ENCODE measurements at regions of chr6 and their contacts with region 1.

Region 1: GRCh38 chr6:46848684-46849360 is 55.6 kb downstream of the MEP1A start:
- DNase-seq: peak; percentile 50 to 59
- ATAC-seq: peak; percentile 64 to 85
- H3K4me3 ChIP-seq: peak overlapping the region in 1 of 4 donors; percentile 14
- H3K27ac ChIP-seq: no peak overlapping the region
- H3K4me1 ChIP-seq: peaks cover 3 to 20% of the 10 kb centered on the region in 2 donors
- H3K27me3 ChIP-seq: no peaks in the 10 kb centered on the region
- CTCF ChIP-seq: peak; percentile 86 to 96 (median 88)
- POLR2A ChIP-seq: no peak

Region 2: GRCh38 chr6:46903175-46903574 is 54.4 kb after region 1 on chr6:
- in situ Hi-C with region 1: no loop called
- intact Hi-C with region 1: no loop called
- DNase-seq: no peak
- ATAC-seq: peak in 1 of 2 donors; percentile 38
- H3K4me3 ChIP-seq: peak overlapping the region in 1 of 4 donors; percentile 7
- H3K27ac ChIP-seq: peak overlapping the region; percentile 29 to 61 (median 53)
- H3K4me1 ChIP-seq: peaks cover 0 to 18% of the 10 kb centered on the region in 2 donors
- H3K27me3 ChIP-seq: no peaks in the 10 kb centered on the region
- CTCF ChIP-seq: no peak
- POLR2A ChIP-seq: no peak

Region 3: DNA sequence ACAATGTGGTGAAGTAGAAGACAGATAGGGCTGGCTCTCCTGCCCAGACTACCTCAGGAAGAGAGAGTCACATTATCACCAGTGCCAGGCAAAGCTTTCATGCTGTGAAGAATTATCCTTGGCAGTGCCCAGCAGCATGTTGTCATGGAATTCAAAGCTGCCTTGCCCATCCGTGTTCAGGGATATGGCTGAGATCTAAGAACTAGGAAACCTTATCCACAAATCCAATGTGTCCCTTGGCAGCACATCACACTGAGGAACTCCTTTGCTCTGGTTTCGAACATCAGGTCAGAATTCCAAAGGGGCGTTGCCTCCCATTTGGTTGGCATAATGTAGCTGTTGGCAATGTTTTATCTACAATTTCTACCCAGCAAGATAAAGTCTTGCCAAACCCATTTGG is 140.6 kb after region 1 on chr6:
- in situ Hi-C with region 1: loop called in 1 of 4 experiments (anchors 5 kb)
- intact Hi-C with region 1: loop called (anchors 1 kb)
- DNase-seq: peak in 1 of 2 donors; percentile 17
- ATAC-seq: peak; percentile 46 to 49
- H3K4me3 ChIP-seq: no peak overlapping the region
- H3K27ac ChIP-seq: peak overlapping the region in 3 of 4 donors; percentile 45 to 52 (median 50)
- H3K4me1 ChIP-seq: peaks cover 4 to 15% of the 10 kb centered on the region in 2 donors
- H3K27me3 ChIP-seq: no peaks in the 10 kb centered on the region
- CTCF ChIP-seq: no peak
- POLR2A ChIP-seq: no peak

Region 4: DNA sequence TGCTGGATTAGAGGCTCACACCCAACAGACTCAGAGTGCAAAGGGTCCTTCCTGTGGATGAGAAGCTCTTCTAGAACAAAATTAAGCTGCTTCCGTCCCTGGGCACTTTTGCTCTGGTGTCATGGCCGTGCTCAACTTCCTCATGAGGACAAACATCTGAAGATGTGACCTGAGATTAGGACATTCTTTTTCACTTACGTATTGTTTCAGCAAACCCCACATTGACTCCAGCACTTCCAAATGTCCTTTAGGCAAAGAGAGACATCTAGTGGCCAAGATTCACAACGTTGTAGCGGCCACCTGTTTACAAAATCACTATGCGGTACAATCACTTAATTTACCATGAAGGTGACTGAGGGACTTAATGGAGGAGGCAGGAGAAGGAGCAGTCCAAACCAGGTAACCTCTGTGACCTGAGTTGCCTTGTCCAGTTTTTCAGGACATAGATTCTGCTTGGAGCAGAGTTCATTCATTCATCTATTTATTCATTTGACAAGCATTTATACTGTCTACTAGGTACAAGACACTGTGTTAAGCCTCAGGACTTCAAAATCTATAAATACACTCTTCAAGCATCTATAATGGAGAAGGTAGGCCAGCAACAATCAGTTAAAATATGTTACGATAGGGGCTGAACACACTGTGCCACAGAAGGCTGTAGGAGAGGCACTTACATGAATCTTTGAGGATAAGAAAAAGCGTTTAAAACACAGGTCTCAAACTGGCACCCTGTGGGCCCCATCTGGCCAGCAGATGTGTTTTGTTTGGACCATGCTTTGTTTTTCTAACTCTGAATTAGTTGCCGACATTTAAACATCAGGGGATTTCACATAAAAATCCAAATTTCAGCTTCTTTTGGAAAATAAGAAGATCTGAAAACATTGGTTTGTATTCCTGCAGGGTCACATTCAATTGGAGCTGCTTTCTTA is 198.9 kb after region 1 on chr6:
- in situ Hi-C with region 1: loop called (anchors 10 kb)
- intact Hi-C with region 1: loop called (anchors 1 kb)
- DNase-seq: peak; percentile 5 to 18
- ATAC-seq: peak; percentile 93 to 96
- H3K4me3 ChIP-seq: no peak overlapping the region
- H3K27ac ChIP-seq: peak overlapping the region in 1 of 4 donors; percentile 43
- H3K4me1 ChIP-seq: no peaks in the 10 kb centered on the region
- H3K27me3 ChIP-seq: no peaks in the 10 kb centered on the region
- CTCF ChIP-seq: peak; percentile 56 to 77 (median 63)
- POLR2A ChIP-seq: no peak

Region 5: DNA sequence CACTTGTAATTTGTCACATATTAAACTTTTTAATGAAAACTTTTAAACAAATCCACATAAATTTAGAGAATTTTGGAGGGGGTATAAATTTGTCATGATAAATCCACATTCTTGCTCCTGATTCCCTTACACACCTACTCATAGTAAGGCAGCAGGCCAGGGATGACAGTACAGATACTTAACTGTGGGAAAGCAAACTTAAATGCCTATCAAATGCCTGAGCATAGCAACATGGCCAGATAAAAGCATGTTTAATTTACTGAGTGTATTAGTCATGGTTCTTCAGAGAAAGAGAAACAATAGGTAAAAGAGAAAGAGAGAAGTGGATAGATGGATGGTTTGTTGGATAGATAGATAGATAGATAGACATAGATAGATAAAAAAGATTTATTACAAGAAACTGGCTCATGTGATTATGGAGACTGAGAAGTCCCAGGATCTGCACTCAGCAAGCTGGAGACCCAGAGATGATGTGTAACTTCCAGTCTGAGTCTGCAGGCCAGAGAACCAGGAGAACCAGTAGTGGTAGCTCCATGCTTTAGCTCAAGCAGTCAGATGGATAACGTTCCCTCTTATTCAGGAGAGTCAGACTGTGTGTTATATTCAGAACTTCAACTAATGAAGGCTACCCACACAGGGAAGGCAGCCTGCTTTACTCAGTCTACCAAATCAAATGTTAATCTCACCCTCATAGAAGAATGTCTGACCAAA is 209.2 kb after region 1 on chr6:
- in situ Hi-C with region 1: loop called in 1 of 4 experiments (anchors 10 kb)
- intact Hi-C with region 1: no loop called
- DNase-seq: no peak
- ATAC-seq: no peak
- H3K4me3 ChIP-seq: no peak overlapping the region
- H3K27ac ChIP-seq: no peak overlapping the region
- H3K4me1 ChIP-seq: no peaks in the 10 kb centered on the region
- H3K27me3 ChIP-seq: no peaks in the 10 kb centered on the region
- CTCF ChIP-seq: no peak
- POLR2A ChIP-seq: no peak